IMR-90 (cell line): ENCODE measurements at regions of chr16 and their contacts with region 1.

Region 1: GRCh38 chr16:4957720-4958509 is at the start of gene SEC14L5:
- DNase-seq: peak; percentile 97
- ATAC-seq: peak; percentile 99
- H3K4me3 ChIP-seq: peak within 1 kb of the TSS; percentile 48
- H3K27ac ChIP-seq: no peak within 1 kb of the TSS
- H3K4me1 ChIP-seq: peaks cover 3% of the 10 kb centered on the region; the same call in 1 of the 2 replicates
- H3K27me3 ChIP-seq: peaks cover 5% of the 10 kb centered on the region
- CTCF ChIP-seq: no peak
- POLR2A ChIP-seq: no peak
- RAD21 ChIP-seq: no peak
- total RNA-seq, gene SEC14L5: not detected in 2 replicates

Region 2: GRCh38 chr16:4506450-4506849 is 451.5 kb before region 1 on chr16:
- CTCF ChIA-PET with region 1: no interaction called
- POLR2A ChIA-PET with region 1: no interaction called
- dilution Hi-C with region 1: no loop called
- in situ Hi-C with region 1: loop called (anchors 25 kb)
- intact Hi-C with region 1: loop called (anchors 10 kb)
- DNase-seq: peak; percentile 82
- ATAC-seq: peak; percentile 95
- H3K4me3 ChIP-seq: no peak overlapping the region
- H3K27ac ChIP-seq: no peak overlapping the region
- H3K4me1 ChIP-seq: peaks cover 8% of the 10 kb centered on the region
- H3K27me3 ChIP-seq: no peaks in the 10 kb centered on the region
- CTCF ChIP-seq: peak; percentile 84
- POLR2A ChIP-seq: no peak
- RAD21 ChIP-seq: peak; percentile 91

Region 3: GRCh38 chr16:4613636-4614570 is 344.0 kb before region 1 on chr16:
- CTCF ChIA-PET with region 1: interaction called, 5 read pairs
- POLR2A ChIA-PET with region 1: no interaction called
- dilution Hi-C with region 1: no loop called
- in situ Hi-C with region 1: no loop called
- intact Hi-C with region 1: loop called (anchors 2 kb)
- DNase-seq: peak; percentile 48
- ATAC-seq: peak; percentile 13
- H3K4me3 ChIP-seq: peak overlapping the region; percentile 100
- H3K27ac ChIP-seq: peak overlapping the region; percentile 99
- H3K4me1 ChIP-seq: peaks cover 25% of the 10 kb centered on the region
- H3K27me3 ChIP-seq: no peaks in the 10 kb centered on the region
- CTCF ChIP-seq: no peak
- POLR2A ChIP-seq: no peak
- RAD21 ChIP-seq: no peak

Region 4: DNA sequence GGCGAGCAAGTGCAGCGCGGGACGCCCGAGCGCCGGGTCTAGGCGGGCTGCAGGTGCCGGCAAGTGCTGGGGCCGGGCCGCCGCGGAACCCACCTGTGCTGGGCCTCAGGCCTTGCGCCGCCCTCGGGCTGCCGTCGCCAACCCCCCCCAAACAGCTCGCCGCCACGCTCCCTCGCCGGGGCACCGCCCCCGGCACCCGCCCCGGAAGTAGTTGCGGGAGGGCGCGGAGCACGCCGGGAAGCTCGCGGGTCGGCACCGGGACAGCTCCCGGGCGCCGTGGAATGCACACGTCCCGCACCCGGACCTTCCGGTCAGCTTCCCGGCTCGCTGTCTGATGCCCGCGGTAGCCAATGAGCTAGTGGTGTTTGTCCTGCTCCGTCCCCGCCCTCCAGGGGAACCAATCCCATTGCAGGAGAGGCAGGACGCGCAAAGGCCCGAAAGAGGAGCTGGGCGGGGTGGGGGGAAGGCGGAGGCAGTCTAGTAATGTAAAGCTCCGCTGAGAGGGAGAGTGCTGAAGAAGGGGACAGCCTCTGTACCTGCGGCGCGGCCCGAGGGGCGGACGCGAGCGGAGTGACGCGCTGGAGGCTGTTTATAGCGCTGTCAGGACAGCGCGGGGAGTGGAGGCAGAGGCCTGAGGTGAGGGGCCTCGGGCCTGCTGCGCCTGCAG is 223.7 kb before region 1 on chr16 and contains the starts of genes ANKS3 and DNAAF8:
- CTCF ChIA-PET with region 1: interaction called, 4 read pairs
- POLR2A ChIA-PET with region 1: no interaction called
- dilution Hi-C with region 1: no loop called
- in situ Hi-C with region 1: no loop called
- intact Hi-C with region 1: loop called (anchors 2 kb)
- DNase-seq: peak; percentile 97
- ATAC-seq: peak; percentile 95
- H3K4me3 ChIP-seq: peak within 1 kb of the TSS; percentile 89
- H3K27ac ChIP-seq: peak within 1 kb of the TSS; percentile 84
- H3K4me1 ChIP-seq: peaks cover 4% of the 10 kb centered on the region
- H3K27me3 ChIP-seq: no peaks in the 10 kb centered on the region
- CTCF ChIP-seq: no peak
- POLR2A ChIP-seq: no peak; the same call in 1 of the 2 replicates
- RAD21 ChIP-seq: no peak
- total RNA-seq, gene ANKS3: 22.2 and 24.4 TPM in 2 replicates
- total RNA-seq, gene DNAAF8: 0.54 and 0.56 TPM in 2 replicates

Region 5: DNA sequence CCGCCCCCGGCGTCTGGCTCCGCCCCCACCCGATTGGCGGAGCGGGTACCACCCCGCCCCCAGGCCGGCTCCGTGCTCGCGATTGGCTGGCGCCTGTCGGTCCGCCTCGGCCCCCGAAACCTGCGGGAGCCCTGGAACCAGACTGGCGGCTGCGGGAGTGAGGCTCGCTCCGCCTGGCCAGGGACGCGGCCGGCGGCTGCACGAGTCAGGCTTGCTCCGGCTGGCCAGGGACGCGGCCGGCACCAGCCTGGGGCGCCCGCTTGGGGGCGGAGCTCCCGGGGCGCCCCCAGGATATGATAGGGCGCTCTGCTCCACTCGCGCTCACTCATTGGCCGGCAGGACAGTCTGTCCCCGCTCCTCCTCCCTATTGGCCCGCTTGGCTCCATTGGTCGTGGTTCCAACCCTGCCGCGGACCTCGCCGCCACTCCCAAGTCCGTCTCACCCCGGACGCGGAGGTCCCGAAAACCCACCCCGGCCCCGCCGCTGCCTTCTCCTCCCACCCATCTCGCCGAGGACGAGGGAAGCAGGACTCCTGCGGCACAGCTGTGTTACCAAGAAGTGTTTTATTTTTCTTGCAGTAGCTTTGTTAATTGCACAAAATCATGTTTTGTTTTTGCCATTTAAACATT is 155.1 kb before region 1 on chr16:
- CTCF ChIA-PET with region 1: no interaction called
- POLR2A ChIA-PET with region 1: interaction called, 5 read pairs
- dilution Hi-C with region 1: no loop called
- in situ Hi-C with region 1: no loop called
- intact Hi-C with region 1: loop called (anchors 2 kb)
- DNase-seq: peak; percentile 88
- ATAC-seq: peak; percentile 97
- H3K4me3 ChIP-seq: peak overlapping the region; percentile 94
- H3K27ac ChIP-seq: peak overlapping the region; percentile 59
- H3K4me1 ChIP-seq: peaks cover 5% of the 10 kb centered on the region; the same call in 1 of the 2 replicates
- H3K27me3 ChIP-seq: no peaks in the 10 kb centered on the region
- CTCF ChIP-seq: no peak
- POLR2A ChIP-seq: no peak
- RAD21 ChIP-seq: no peak